Activated CD4-positive, alpha-beta memory T cell treated with anti-CD3 and anti-CD28 coated beads for 36 hours (primary cell): ENCODE measurements at regions of chr1 and their contacts with region 1.

Region 1: GRCh38 chr1:28359592-28360239 is 9.8 kb upstream of the PHACTR4 start:
- DNase-seq: peak; percentile 84
- H3K4me3 Mint-ChIP-seq: no peak overlapping the region
- H3K27ac Mint-ChIP-seq: no peak overlapping the region
- H3K4me1 Mint-ChIP-seq: no peaks in the 10 kb centered on the region
- H3K27me3 Mint-ChIP-seq: no peaks in the 10 kb centered on the region

Region 2: DNA sequence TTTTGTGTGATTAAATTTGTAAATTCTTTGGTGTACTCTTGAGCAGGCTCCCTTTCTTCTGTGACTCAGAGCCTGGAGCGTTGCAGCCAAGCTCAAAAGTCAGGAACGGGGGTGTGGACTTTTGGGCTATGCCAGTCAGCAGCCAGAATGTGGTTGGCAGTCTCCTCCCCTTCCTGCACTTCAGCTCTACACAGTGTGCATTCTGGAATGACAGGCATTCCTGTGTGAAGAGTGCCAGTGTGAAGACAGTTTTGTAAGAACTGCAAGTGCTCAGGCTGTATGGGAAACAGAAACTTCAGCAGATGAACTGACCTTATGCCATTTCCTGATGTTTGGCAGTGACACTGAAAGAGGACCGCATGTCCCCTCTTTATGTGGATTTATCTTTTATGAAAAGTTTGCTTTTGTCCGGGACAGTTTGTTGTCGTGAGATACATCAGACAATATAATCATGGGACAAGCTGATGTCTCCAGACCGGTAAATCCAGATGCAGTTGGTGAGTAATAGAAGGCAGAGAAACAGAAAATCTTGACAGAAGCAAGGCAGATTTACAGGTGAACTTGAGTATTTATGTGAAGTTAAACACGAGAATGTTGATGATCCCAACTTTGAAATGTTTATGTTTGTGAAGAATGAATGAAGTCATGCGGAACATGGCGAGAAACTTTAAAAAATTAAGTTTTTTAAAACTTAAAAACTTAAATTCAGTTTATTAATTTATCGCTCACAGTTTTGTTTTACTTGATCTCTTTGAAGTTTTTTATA is 78.4 kb after region 1 on chr1:
- CTCF ChIA-PET with region 1: interaction called, 10 read pairs
- POLR2A ChIA-PET with region 1: no interaction called
- intact Hi-C with region 1: no loop called
- DNase-seq: peak; percentile 18
- H3K4me3 Mint-ChIP-seq: no peak overlapping the region
- H3K27ac Mint-ChIP-seq: no peak overlapping the region
- H3K4me1 Mint-ChIP-seq: peaks cover 21% of the 10 kb centered on the region
- H3K27me3 Mint-ChIP-seq: no peaks in the 10 kb centered on the region

Region 3: GRCh38 chr1:28512058-28512611 is 152.4 kb after region 1 on chr1:
- CTCF ChIA-PET with region 1: interaction called, 10 read pairs
- POLR2A ChIA-PET with region 1: interaction called, 5 read pairs
- intact Hi-C with region 1: no loop called
- DNase-seq: no peak
- H3K4me3 Mint-ChIP-seq: peak overlapping the region; percentile 60
- H3K27ac Mint-ChIP-seq: peak overlapping the region; percentile 97
- H3K4me1 Mint-ChIP-seq: peaks cover 50% of the 10 kb centered on the region
- H3K27me3 Mint-ChIP-seq: peaks cover 4% of the 10 kb centered on the region